Gastrocnemius medialis (tissue), 4 donors: ENCODE measurements at regions of chr19 and their contacts with region 1.

Region 1: GRCh38 chr19:43463381-43464136 is 1.8 kb downstream of the LYPD3 start:
- DNase-seq: peak; percentile 85 to 90
- ATAC-seq: peak; percentile 91 to 95
- H3K4me3 ChIP-seq: peak overlapping the region; percentile 64 to 94 (median 68)
- H3K27ac ChIP-seq: peak overlapping the region; percentile 67 to 80 (median 70)
- H3K4me1 ChIP-seq: no peaks in the 10 kb centered on the region
- H3K27me3 ChIP-seq: peaks cover 12 to 35% (median 18%) of the 10 kb centered on the region in 3 donors
- CTCF ChIP-seq: no peak
- POLR2A ChIP-seq: peak in 1 of 2 donors; percentile 36

Region 2: GRCh38 chr19:43474986-43475705 is 11.6 kb after region 1 on chr19:
- in situ Hi-C with region 1: no loop called
- intact Hi-C with region 1: loop called (anchors 1 kb)
- DNase-seq: peak; percentile 75 to 84
- ATAC-seq: peak; percentile 92 to 97
- H3K4me3 ChIP-seq: peak overlapping the region; percentile 35 to 57 (median 48)
- H3K27ac ChIP-seq: peak overlapping the region; percentile 66 to 79 (median 72)
- H3K4me1 ChIP-seq: peaks cover 0 to 8% of the 10 kb centered on the region in 2 donors
- H3K27me3 ChIP-seq: no peaks in the 10 kb centered on the region
- CTCF ChIP-seq: no peak
- POLR2A ChIP-seq: peak; percentile 26 to 50